Vagina (tissue), 2 donors: ENCODE measurements at regions of chr11 and their contacts with region 1.

Region 1: GRCh38 chr11:1763796-1764661 is at the start of gene CTSD:
- DNase-seq: no peak
- H3K4me3 ChIP-seq: peak within 1 kb of the TSS; percentile 86 to 95
- H3K27ac ChIP-seq: peak within 1 kb of the TSS; percentile 95
- H3K4me1 ChIP-seq: peaks cover 62% of the 10 kb centered on the region
- H3K27me3 ChIP-seq: no peaks in the 10 kb centered on the region
- CTCF ChIP-seq: no peak
- POLR2A ChIP-seq: peak in 1 of 2 donors; percentile 42
- total RNA-seq, gene CTSD: 508 TPM

Region 2: GRCh38 chr11:1267441-1268100 is 496.5 kb before region 1 on chr11:
- intact Hi-C with region 1: loop called (anchors 5 kb)
- DNase-seq: no peak
- H3K4me3 ChIP-seq: no peak overlapping the region
- H3K27ac ChIP-seq: no peak overlapping the region
- H3K4me1 ChIP-seq: peaks cover 6% of the 10 kb centered on the region
- H3K27me3 ChIP-seq: no peaks in the 10 kb centered on the region
- CTCF ChIP-seq: no peak
- POLR2A ChIP-seq: no peak